RWPE1 (cell line): ENCODE measurements at regions of chr15 and their contacts with region 1.

Region 1: DNA sequence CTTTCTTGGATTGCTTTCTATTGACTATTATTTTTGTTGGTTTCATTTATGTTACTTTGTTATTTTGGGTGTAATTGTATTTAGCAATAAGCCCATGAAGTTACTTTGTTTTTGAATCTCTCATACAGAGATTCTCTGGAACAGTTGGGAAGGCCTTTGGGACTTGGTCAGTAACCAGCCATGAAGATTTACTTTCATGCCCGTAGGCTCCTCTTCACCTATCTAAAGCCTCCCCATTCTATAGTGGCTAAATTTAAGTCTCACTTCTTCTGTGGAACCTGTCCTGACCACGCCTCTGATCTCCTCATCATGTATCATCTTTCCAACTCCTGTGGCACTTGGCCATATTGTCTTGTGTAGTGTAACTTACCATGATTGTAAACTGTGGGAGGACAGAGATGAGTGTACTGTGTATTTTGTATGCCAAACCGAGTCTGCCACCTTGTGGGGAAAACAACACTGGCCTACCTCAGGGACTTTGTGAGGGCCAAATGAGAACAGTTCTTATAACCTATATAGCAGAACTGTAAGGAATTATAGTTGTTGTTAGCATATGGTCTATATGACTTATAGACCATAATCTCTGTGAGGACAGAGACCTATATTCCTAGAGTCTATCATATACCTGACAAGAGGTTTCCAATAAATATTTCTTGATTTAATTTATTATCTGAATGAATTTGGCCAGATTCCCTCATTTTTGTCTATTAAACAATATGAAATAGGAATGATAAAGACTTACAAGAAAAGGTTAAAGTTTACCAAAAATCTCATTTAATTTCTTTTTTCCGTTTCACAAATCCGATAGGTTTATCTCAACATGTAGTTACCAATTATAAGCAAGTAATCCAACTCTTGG is 75.0 kb downstream of the STARD9 start:
- DNase-seq: peak; percentile 82
- H3K27ac ChIP-seq: no peak overlapping the region
- CTCF ChIP-seq: peak; percentile 87

Region 2: DNA sequence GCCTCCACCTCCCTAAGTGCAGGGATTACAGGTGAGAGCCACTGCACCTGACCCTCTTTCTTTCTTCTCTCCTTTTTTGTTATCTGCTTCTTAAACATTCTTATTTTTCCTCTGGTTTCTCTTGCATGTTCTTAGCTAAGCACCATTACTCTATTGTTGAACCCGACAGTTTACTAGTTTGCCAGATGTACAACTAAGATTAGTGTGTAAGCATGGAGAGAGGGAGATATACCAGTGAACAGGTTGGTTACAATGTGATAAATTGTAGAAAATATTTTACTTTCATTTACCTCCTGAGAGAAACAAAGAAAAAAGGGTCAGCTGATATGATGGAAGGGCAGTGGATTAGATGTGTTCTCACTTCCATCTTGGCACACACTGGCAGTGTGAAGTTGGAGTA is 96.9 kb before region 1 on chr15:
- CTCF ChIA-PET with region 1: interaction called, 10 read pairs
- POLR2A ChIA-PET with region 1: no interaction called
- DNase-seq: no peak
- H3K27ac ChIP-seq: no peak overlapping the region
- CTCF ChIP-seq: no peak

Region 3: GRCh38 chr15:42591238-42591934 is 59.1 kb before region 1 on chr15:
- CTCF ChIA-PET with region 1: no interaction called
- POLR2A ChIA-PET with region 1: no interaction called
- DNase-seq: no peak
- H3K27ac ChIP-seq: no peak overlapping the region
- CTCF ChIP-seq: peak; percentile 32; the same call in 1 of the 2 replicates

Region 4: DNA sequence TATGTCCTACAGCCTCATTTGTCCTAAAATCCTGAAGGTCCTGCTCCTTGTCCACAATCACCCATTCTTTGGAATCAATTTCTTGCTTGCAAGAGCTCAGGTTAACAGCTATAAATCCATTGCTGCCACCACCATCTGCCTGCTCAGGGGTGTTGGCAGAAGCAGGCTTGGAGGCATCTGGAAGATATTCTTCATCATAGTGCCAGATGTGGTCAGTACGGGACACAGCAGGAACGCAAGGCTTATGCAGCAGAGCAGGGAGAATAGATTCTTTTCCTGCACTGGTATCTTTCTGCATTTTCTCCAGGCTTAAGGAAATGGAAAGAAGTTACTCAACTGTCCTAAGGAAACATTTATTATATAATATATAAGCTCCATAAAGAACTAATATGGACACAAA is 125.0 kb after region 1 on chr15:
- CTCF ChIA-PET with region 1: no interaction called
- POLR2A ChIA-PET with region 1: no interaction called
- DNase-seq: no peak
- H3K27ac ChIP-seq: no peak overlapping the region
- CTCF ChIP-seq: no peak